ENCODE measurements at regions of chr1 and their contacts with region 1.

Region 1: GRCh38 chr1:198681831-198682759 is 43.3 kb downstream of the PTPRC start:
- DNase-seq: peak; percentile 91
- ATAC-seq: peak; percentile 72
- H3K4me3 Mint-ChIP-seq: peak overlapping the region; percentile 67
- H3K27ac Mint-ChIP-seq: peak overlapping the region; percentile 90
- H3K4me1 Mint-ChIP-seq: peaks cover 85% of the 10 kb centered on the region
- H3K27me3 Mint-ChIP-seq: no peaks in the 10 kb centered on the region
- CTCF ChIP-seq: no peak

Region 2: GRCh38 chr1:198167436-198167934 is 514.6 kb before region 1 on chr1:
- CTCF ChIA-PET with region 1: no interaction called
- POLR2A ChIA-PET with region 1: no interaction called
- intact Hi-C with region 1: loop called (anchors 5 kb)
- DNase-seq: peak; percentile 43
- ATAC-seq: peak; percentile 50
- H3K4me3 Mint-ChIP-seq: peak overlapping the region; percentile 74
- H3K27ac Mint-ChIP-seq: peak overlapping the region; percentile 95
- H3K4me1 Mint-ChIP-seq: peaks cover 83% of the 10 kb centered on the region
- H3K27me3 Mint-ChIP-seq: no peaks in the 10 kb centered on the region
- CTCF ChIP-seq: no peak

Region 3: DNA sequence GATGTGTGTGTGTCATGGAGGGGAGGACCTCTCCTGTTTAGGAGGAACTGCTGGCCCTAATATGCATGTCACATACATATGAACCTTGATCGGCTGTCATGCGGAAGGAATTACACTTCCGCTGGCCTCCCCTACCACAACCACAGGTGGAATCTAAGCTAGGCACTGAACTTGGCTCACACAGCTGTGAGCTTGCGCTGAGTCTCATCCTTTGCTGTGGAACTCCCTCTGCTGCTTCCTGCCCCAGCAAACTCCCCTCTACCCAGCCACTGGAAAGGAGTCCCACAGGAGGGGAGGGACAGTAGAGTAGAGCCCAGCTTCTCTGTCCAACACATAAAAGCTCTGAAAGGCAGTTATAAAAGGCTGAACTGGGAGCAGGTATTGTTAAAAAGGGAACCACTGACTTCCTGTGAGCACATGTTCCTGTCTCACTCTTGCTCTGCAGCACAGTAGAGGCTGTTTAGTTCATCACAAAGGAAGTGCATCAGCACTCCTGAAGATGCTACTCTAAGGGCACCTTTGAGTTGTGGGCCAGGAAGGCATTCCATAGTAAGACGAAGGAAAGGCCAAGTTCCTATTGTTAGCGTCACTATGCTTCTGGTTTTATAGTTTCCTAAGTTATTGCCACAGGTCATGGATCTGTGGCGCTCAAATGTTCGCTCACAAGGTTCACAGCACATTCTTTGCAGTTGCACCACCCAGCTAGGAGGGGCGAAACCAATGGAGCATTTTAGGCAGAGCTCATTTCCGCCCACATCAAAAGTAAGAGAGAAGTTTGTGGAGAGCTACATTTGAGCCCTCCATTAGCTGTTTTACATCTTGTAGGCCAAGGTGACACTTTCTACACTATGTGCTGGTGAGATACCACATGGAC is 60.9 kb before region 1 on chr1:
- CTCF ChIA-PET with region 1: interaction called, 7 read pairs
- POLR2A ChIA-PET with region 1: interaction called, 34 read pairs
- intact Hi-C with region 1: no loop called
- DNase-seq: peak; percentile 89
- ATAC-seq: peak; percentile 74
- H3K4me3 Mint-ChIP-seq: peak overlapping the region; percentile 75
- H3K27ac Mint-ChIP-seq: peak overlapping the region; percentile 99
- H3K4me1 Mint-ChIP-seq: peaks cover 83% of the 10 kb centered on the region
- H3K27me3 Mint-ChIP-seq: no peaks in the 10 kb centered on the region
- CTCF ChIP-seq: no peak

Region 4: GRCh38 chr1:198651650-198652400 is 30.3 kb before region 1 on chr1:
- CTCF ChIA-PET with region 1: interaction called, 27 read pairs
- POLR2A ChIA-PET with region 1: interaction called, 61 read pairs
- intact Hi-C with region 1: loop called (anchors 2 kb)
- DNase-seq: no peak
- ATAC-seq: no peak
- H3K4me3 Mint-ChIP-seq: peak overlapping the region; percentile 71
- H3K27ac Mint-ChIP-seq: peak overlapping the region; percentile 96
- H3K4me1 Mint-ChIP-seq: peaks cover 72% of the 10 kb centered on the region
- H3K27me3 Mint-ChIP-seq: no peaks in the 10 kb centered on the region
- CTCF ChIP-seq: no peak

Region 5: GRCh38 chr1:198669023-198669698 is 12.9 kb before region 1 on chr1:
- CTCF ChIA-PET with region 1: interaction called, 7 read pairs
- POLR2A ChIA-PET with region 1: interaction called, 67 read pairs
- intact Hi-C with region 1: loop called (anchors 2 kb)
- DNase-seq: peak; percentile 57
- ATAC-seq: peak; percentile 78
- H3K4me3 Mint-ChIP-seq: peak overlapping the region; percentile 25
- H3K27ac Mint-ChIP-seq: peak overlapping the region; percentile 93
- H3K4me1 Mint-ChIP-seq: peaks cover 87% of the 10 kb centered on the region
- H3K27me3 Mint-ChIP-seq: no peaks in the 10 kb centered on the region
- CTCF ChIP-seq: no peak

Measured in activated CD8-positive, alpha-beta T cell treated with anti-CD3 and anti-CD28 coated beads for 36 hours (primary cell).